ENCODE measurements at regions of chr7 and their contacts with region 1.

Region 1: DNA sequence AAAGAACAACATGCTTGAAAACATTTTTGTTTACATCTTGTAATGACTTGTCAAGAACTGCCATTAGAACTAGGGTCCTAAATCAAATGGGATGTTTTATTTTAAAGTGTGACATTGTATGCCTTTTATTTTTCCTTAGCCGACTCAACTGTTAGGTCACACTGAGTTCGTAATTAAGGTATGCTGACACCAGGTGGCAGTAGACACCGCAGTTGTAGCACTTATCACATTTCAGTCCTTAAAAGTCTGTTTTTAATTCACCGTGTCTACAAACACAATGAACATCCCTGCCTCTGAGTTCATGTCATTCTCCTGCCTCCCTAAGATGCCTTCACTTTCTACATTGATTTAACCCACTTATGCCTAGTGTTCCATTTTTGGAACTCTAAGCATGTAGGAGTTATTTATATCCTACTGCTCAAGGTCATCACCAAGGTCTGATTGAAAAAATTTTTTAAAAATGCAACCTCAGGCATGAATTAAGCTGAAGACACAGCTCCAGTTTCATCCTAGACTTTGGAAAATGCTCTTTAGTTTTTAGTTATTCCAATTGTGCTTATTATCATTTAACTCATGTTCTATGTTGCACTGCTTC is 186.1 kb downstream of the BMPER start:
- DNase-seq: peak in 1 of 2 experiments; percentile 55
- H3K4me3 ChIP-seq: no peak overlapping the region
- H3K27ac ChIP-seq: no peak overlapping the region
- H3K4me1 ChIP-seq: no peaks in the 10 kb centered on the region
- H3K27me3 ChIP-seq: no peaks in the 10 kb centered on the region
- CTCF ChIP-seq: peak in 2 of 3 experiments; percentile 71 to 78; a peak in 3 of 4 replicates
- EP300 ChIP-seq: no peak
- POLR2A ChIP-seq: no peak
- RAD21 ChIP-seq: peak; percentile 88 to 90

Region 2: GRCh38 chr7:33982425-33982786 is 109.0 kb before region 1 on chr7:
- CTCF ChIA-PET with region 1: interaction called, 111 read pairs
- POLR2A ChIA-PET with region 1: no interaction called
- DNase-seq: no peak
- H3K4me3 ChIP-seq: no peak overlapping the region
- H3K27ac ChIP-seq: no peak overlapping the region
- H3K4me1 ChIP-seq: no peaks in the 10 kb centered on the region
- H3K27me3 ChIP-seq: no peaks in the 10 kb centered on the region
- CTCF ChIP-seq: peak in 2 of 3 experiments; percentile 65 to 73; a peak in 3 of 4 replicates
- EP300 ChIP-seq: no peak
- POLR2A ChIP-seq: no peak
- RAD21 ChIP-seq: peak; percentile 80 to 86

Region 3: GRCh38 chr7:34069630-34070270 is 21.7 kb before region 1 on chr7:
- CTCF ChIA-PET with region 1: interaction called, 28 read pairs
- POLR2A ChIA-PET with region 1: no interaction called
- DNase-seq: no peak
- H3K4me3 ChIP-seq: no peak overlapping the region
- H3K27ac ChIP-seq: no peak overlapping the region
- H3K4me1 ChIP-seq: peaks cover 4 to 13% (median 12%) of the 10 kb centered on the region in 4 experiments
- H3K27me3 ChIP-seq: no peaks in the 10 kb centered on the region
- CTCF ChIP-seq: no peak
- EP300 ChIP-seq: no peak
- POLR2A ChIP-seq: no peak
- RAD21 ChIP-seq: no peak

Region 4: GRCh38 chr7:34133983-34134782 is 42.8 kb after region 1 on chr7:
- CTCF ChIA-PET with region 1: interaction called, 17 read pairs
- POLR2A ChIA-PET with region 1: no interaction called
- DNase-seq: peak; percentile 58 to 89
- H3K4me3 ChIP-seq: no peak overlapping the region
- H3K27ac ChIP-seq: no peak overlapping the region
- H3K4me1 ChIP-seq: peaks cover 0 to 9% (median 4%) of the 10 kb centered on the region in 4 experiments; a peak in 6 of 7 replicates
- H3K27me3 ChIP-seq: no peaks in the 10 kb centered on the region
- CTCF ChIP-seq: peak; percentile 70 to 87 (median 83)
- EP300 ChIP-seq: no peak
- POLR2A ChIP-seq: no peak
- RAD21 ChIP-seq: peak; percentile 97 to 98

Measured in H1 (cell line).